Dorsolateral prefrontal cortex (tissue), 120 donors: ENCODE measurements at regions of chr6 and their contacts with region 1.

Region 1: GRCh38 chr6:121430514-121431460 is 4.7 kb upstream of the GJA1 start:
- DNase-seq: no peak
- H3K4me3 ChIP-seq: peak overlapping the region in 14 of 59 donors; percentile 0 to 46 (median 12)
- H3K27ac ChIP-seq: peak overlapping the region in 13 of 59 donors; percentile 3 to 62 (median 32)
- H3K27me3 ChIP-seq: peaks cover 0 to 6% (median 0%) of the 10 kb centered on the region in 45 donors
- CTCF ChIP-seq: peak; percentile 42 to 93 (median 73)

Region 2: GRCh38 chr6:121849477-121849876 is 418.7 kb after region 1 on chr6:
- intact Hi-C with region 1: loop called (anchors 10 kb)
- DNase-seq: peak in 1 of 10 donors; percentile 16
- H3K4me3 ChIP-seq: no peak overlapping the region
- H3K27ac ChIP-seq: peak overlapping the region in 32 of 59 donors; percentile 4 to 75 (median 49)
- H3K27me3 ChIP-seq: peaks cover 0 to 6% (median 0%) of the 10 kb centered on the region in 45 donors
- CTCF ChIP-seq: peak; percentile 16 to 66 (median 51)

Region 3: DNA sequence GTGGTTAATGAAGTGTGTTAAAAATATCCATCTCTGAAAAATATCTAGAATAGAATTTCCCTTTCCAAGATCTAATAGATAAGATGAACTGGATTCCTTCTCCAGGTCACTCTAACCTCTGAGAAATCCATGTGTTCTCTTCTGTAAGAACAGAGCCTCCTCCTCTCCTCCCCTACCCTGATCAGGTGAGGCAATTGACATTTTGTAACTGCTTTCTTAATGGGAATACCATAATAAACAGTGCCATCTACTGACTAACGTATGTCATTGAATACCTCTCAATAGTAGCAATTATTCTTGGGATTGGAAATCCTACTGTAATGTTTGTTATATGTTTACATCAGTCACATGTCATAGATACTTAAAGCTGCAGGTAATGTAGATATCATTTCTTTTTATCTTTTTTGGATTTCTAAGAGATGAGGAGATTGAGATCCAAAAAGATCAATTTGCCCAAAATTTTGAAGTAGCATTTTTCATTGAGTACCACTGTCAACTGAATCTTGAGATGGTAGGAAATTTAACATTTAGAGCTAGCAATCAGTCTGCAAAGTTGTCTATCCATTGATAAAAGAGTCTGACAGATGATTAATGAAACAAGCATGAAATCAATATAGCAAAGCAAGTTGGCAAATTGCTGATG is 602.9 kb after region 1 on chr6:
- intact Hi-C with region 1: loop called (anchors 5 to 10 kb)
- DNase-seq: no peak
- H3K4me3 ChIP-seq: no peak overlapping the region
- H3K27ac ChIP-seq: peak overlapping the region in 1 of 59 donors; percentile 14
- H3K27me3 ChIP-seq: peaks cover 0 to 3% (median 0%) of the 10 kb centered on the region in 45 donors
- CTCF ChIP-seq: peak in 55 of 56 donors; percentile 48 to 82 (median 65)

Region 4: GRCh38 chr6:122184401-122184827 is 753.6 kb after region 1 on chr6:
- intact Hi-C with region 1: loop called (anchors 5 kb)
- DNase-seq: no peak
- H3K4me3 ChIP-seq: peak overlapping the region in 6 of 59 donors; percentile 11 to 40 (median 24)
- H3K27ac ChIP-seq: no peak overlapping the region
- H3K27me3 ChIP-seq: peaks cover 0 to 4% (median 0%) of the 10 kb centered on the region in 45 donors
- CTCF ChIP-seq: peak in 48 of 56 donors; percentile 22 to 71 (median 46)

Region 5: GRCh38 chr6:122365775-122366403 is 935.1 kb after region 1 on chr6:
- intact Hi-C with region 1: loop called in 1 of 2 experiments (anchors 10 kb)
- DNase-seq: no peak
- H3K4me3 ChIP-seq: no peak overlapping the region
- H3K27ac ChIP-seq: no peak overlapping the region
- H3K27me3 ChIP-seq: peaks cover 0 to 6% (median 0%) of the 10 kb centered on the region in 45 donors
- CTCF ChIP-seq: no peak